ENCODE measurements at regions of chr10 and their contacts with region 1.

Region 1: GRCh38 chr10:31340343-31340742 is 21.3 kb downstream of the ZEB1 start:
- DNase-seq: peak; percentile 49
- H3K4me3 Mint-ChIP-seq: no peak overlapping the region
- H3K27ac Mint-ChIP-seq: no peak overlapping the region
- H3K4me1 Mint-ChIP-seq: peaks cover 31% of the 10 kb centered on the region
- H3K27me3 Mint-ChIP-seq: no peaks in the 10 kb centered on the region

Region 2: DNA sequence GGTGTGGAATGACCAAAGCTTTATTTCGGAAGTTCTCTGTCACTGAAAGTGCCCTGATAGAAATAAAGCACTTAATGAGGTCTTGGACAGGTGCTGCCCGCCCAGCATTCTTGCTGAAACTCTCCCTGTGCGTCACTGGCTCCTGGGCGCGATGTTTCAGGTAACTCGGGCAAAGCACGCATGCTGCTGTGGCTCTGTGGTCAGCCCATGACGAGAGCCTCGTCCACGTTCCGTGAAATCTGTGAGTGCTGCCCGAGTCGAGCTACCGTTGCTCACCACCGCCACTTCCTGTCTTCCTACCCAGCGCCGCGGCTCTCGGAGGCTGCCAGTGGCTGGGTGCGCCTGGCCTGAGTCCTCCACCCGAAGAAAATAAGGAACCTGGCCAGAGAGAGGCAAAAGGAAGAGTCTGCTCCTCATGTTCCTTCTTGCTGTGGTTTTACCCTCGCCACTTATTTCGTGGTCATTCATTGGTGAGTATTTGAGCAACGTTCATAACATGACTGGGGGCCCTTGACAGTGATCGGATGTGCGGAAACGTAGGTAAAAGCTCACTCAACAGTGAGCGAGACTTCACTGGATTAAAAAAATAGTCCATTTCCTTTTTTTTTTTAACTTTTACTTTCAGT is 810.9 kb before region 1 on chr10:
- CTCF ChIA-PET with region 1: no interaction called
- intact Hi-C with region 1: loop called (anchors 10 kb)
- DNase-seq: peak; percentile 88
- H3K4me3 Mint-ChIP-seq: peak overlapping the region; percentile 73
- H3K27ac Mint-ChIP-seq: peak overlapping the region; percentile 85
- H3K4me1 Mint-ChIP-seq: peaks cover 52% of the 10 kb centered on the region
- H3K27me3 Mint-ChIP-seq: no peaks in the 10 kb centered on the region

Region 3: GRCh38 chr10:31101123-31101522 is 239.2 kb before region 1 on chr10:
- CTCF ChIA-PET with region 1: interaction called, 3 read pairs
- intact Hi-C with region 1: loop called (anchors 1 kb)
- DNase-seq: peak; percentile 91
- H3K4me3 Mint-ChIP-seq: peak overlapping the region; percentile 50
- H3K27ac Mint-ChIP-seq: peak overlapping the region; percentile 85
- H3K4me1 Mint-ChIP-seq: peaks cover 44% of the 10 kb centered on the region
- H3K27me3 Mint-ChIP-seq: no peaks in the 10 kb centered on the region

Region 4: DNA sequence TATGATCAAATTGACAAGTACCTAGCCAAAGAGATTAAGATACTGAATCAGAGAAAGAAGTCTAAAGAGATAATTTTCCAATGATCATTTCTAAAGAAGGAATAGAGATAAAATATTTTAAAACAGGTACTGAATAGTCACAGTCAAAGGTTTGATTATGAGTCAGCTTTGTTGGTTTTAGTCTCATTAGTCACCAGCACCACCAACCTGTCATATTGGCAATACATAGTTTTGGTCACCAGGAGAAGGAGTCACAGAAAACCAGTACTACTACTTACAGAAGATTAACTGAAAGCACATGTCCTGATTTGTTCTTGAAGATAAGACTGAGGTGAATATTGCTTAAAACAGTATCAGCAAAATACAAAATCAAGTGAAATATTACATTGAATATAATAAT is 13.2 kb after region 1 on chr10:
- CTCF ChIA-PET with region 1: interaction called, 6 read pairs
- intact Hi-C with region 1: loop called (anchors 1 kb)
- DNase-seq: peak; percentile 40
- H3K4me3 Mint-ChIP-seq: no peak overlapping the region
- H3K27ac Mint-ChIP-seq: no peak overlapping the region
- H3K4me1 Mint-ChIP-seq: peaks cover 60% of the 10 kb centered on the region
- H3K27me3 Mint-ChIP-seq: no peaks in the 10 kb centered on the region

Region 5: DNA sequence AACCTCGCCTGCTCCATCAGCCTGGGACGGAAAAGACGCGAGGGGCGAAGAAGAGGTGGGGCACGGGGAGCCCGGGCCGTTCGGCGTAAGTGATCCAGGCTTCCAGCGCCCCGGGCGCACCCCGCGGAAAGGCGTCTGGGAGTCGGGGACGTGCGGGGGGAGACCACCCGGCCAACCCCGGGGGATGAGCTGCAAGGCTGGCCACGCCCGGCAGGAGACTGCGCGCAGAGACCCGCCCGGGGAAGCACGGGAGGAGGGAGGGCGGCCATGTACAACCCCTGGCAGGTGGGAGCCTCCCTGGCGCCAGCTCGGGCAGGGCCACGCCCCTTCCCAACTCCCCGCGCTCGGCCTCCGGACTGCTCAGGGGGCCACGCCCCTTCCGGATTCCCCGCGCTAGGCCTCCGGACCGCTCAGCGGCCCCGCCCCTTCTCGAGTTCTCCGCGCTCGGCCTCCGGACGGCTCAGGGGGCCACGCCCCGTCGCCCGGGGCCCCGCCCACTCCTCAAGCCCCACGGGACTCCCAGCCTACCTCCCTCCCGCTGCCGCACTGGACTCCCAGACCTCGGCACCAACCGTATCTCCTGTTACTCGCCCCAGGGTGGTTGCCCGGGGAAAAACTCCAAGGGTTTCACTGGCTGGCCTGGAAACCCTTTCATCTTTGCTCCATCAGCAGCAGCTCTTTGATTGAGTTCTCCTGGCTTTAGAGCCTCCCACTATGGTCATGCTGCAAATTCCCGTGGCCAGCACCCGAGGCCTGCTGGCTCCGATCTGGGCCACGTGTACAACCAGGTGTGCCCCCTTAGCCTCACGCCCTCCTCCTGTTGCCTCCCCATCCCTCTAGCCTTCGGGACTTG is 263.1 kb after region 1 on chr10:
- CTCF ChIA-PET with region 1: no interaction called
- intact Hi-C with region 1: loop called (anchors 5 kb)
- DNase-seq: peak; percentile 92
- H3K4me3 Mint-ChIP-seq: peak overlapping the region; percentile 86
- H3K27ac Mint-ChIP-seq: peak overlapping the region; percentile 58
- H3K4me1 Mint-ChIP-seq: peaks cover 31% of the 10 kb centered on the region
- H3K27me3 Mint-ChIP-seq: peaks cover 2% of the 10 kb centered on the region

Region 6: GRCh38 chr10:31759799-31760626 is 419.7 kb after region 1 on chr10:
- CTCF ChIA-PET with region 1: no interaction called
- intact Hi-C with region 1: no loop called
- DNase-seq: peak; percentile 96
- H3K4me3 Mint-ChIP-seq: peak overlapping the region; percentile 94
- H3K27ac Mint-ChIP-seq: peak overlapping the region; percentile 95
- H3K4me1 Mint-ChIP-seq: peaks cover 18% of the 10 kb centered on the region
- H3K27me3 Mint-ChIP-seq: no peaks in the 10 kb centered on the region

Region 7: DNA sequence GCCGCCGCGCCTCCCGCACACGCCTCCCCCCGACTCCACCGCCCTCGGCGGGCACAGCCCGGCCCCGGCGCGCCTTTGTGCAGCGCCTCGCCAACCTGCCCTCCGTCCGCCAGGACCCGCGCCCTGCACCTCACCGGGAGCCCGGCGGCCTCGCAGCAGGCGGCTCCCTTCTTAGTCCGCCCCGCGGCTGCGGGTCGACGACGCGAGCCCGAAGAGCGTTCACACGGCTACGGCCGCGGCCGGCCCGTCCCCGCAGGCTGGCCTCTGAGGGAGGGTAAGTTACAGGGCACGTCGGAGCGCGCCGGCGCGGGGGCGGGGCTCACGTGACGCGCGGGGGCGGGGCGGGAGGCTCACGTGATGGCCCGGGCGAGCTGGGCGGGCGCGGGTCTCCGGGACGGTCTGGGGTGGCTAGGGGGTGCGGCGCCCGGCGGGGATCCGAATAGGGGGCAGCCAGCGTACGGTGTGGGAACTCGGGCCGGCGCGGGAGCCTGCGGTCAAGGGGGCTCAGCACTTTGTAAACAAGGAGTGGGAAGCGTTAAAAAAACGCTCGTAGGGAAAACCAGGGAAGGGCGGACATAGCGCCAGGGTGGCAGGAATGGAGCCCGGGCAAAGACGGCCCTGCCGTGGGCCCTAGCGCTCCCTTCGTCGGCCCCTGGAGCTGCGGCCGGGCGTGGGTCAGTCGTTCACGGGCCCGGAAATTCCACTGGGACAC is 588.4 kb after region 1 on chr10 and contains the start of gene ARHGAP12:
- CTCF ChIA-PET with region 1: no interaction called
- intact Hi-C with region 1: loop called (anchors 10 kb)
- DNase-seq: peak; percentile 78
- H3K4me3 Mint-ChIP-seq: peak within 1 kb of the TSS; percentile 88
- H3K27ac Mint-ChIP-seq: peak within 1 kb of the TSS; percentile 30
- H3K4me1 Mint-ChIP-seq: peaks cover 37% of the 10 kb centered on the region
- H3K27me3 Mint-ChIP-seq: no peaks in the 10 kb centered on the region
- total RNA-seq, gene ARHGAP12: 2.3 to 2.6 TPM

Region 8: DNA sequence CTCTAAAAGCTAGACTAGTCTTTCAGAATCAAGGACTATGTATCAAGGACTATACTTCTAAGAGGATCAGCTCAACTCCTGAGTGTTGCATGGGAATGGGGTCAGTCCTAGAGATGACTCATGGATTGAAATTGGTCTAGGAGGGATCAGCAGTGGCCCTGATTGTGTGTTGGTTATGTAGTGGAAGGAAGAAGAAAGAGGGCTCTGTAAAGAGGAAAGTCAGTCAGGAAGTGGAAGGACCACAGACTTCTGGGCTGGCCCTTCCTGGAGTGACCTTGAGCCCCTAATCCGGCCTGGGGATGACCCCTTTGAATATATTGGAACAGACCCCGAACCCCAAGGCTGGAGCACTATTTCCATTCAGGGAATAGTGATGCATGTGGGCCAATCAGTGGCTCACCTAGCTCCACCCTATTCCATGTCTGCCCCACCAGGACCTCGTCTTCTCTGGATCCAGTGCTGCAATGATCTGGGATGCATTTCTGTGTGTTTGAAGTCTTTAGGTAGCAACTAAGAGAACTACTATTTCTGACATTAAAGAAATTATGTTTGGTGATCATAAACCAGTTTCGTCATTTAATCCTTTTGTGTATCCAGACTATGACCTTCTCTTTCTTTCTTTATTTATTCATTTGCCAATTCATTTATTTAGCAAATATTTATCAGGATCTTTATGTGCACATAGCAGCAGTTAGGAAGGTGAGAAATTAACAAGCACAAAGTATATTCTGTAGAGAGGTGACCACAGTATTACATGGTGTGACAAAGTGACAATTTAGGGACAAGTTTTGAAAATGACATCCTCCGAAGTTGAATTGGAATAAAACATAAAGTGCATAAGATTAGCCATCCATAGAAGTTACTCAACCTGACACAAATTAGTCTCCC is 764.5 kb after region 1 on chr10:
- CTCF ChIA-PET with region 1: no interaction called
- intact Hi-C with region 1: no loop called
- DNase-seq: no peak
- H3K4me3 Mint-ChIP-seq: no peak overlapping the region
- H3K27ac Mint-ChIP-seq: no peak overlapping the region
- H3K4me1 Mint-ChIP-seq: no peaks in the 10 kb centered on the region
- H3K27me3 Mint-ChIP-seq: peaks cover 3% of the 10 kb centered on the region

Region 9: DNA sequence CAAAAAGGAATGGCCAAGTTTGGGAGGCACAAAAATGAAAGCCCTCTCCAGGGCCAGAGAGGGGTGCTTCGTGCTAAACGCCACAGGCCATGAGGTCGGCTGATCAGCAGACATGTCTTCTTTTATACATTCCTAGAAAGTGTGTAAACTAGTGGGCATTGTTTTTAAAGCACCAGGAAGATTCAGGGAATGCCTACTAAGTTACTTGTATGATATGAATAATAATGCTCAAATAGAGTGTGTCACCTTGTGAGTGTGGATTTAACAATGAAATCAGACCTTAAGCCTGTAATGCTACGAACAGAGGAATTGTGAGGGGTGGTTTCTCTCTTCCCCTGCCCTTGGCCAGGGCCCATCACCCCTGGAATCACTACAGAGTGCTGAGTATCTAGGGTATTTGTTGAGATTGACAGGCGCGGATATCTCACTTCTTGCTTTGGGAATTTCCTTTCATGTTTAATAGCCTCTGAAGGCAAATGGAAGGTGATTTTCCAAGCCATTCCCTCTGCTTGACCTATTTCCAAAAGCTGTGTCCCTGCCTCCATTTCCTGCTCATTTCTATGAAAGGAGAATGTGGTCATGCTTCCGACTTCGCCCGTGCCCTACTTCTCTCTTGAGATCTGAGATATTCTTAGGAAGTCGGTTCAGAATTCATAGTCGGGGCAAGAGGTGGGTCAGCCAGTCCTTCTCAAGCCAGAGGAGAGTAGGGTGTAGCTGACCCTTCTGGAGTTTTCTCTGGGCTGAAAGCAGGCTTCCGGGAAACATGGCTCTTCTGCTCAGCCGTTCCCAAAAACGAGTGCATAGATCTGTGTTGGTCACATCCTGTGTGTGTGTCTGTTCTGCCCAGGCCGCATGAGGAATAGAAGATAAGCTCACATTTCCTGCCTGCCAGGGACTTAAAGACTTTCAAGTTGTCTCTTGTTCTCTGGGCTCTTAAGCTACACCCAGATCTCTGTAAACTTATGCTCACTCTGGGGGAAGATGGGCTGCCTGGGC is 1785.5 kb after region 1 on chr10:
- CTCF ChIA-PET with region 1: no interaction called
- intact Hi-C with region 1: loop called (anchors 5 kb)
- DNase-seq: peak; percentile 67
- H3K4me3 Mint-ChIP-seq: no peak overlapping the region
- H3K27ac Mint-ChIP-seq: peak overlapping the region; percentile 64
- H3K4me1 Mint-ChIP-seq: peaks cover 64% of the 10 kb centered on the region
- H3K27me3 Mint-ChIP-seq: peaks cover 6% of the 10 kb centered on the region